Left cardiac atrium (tissue), 4 donors: ENCODE measurements at regions of chr1 and their contacts with region 1.

Region 1: GRCh38 chr1:26233903-26234643 is at the start of gene CEP85:
- DNase-seq: peak; percentile 99
- ATAC-seq: peak; percentile 99 to 100
- total RNA-seq, gene CEP85: 17.7 to 38.6 TPM

Region 2: DNA sequence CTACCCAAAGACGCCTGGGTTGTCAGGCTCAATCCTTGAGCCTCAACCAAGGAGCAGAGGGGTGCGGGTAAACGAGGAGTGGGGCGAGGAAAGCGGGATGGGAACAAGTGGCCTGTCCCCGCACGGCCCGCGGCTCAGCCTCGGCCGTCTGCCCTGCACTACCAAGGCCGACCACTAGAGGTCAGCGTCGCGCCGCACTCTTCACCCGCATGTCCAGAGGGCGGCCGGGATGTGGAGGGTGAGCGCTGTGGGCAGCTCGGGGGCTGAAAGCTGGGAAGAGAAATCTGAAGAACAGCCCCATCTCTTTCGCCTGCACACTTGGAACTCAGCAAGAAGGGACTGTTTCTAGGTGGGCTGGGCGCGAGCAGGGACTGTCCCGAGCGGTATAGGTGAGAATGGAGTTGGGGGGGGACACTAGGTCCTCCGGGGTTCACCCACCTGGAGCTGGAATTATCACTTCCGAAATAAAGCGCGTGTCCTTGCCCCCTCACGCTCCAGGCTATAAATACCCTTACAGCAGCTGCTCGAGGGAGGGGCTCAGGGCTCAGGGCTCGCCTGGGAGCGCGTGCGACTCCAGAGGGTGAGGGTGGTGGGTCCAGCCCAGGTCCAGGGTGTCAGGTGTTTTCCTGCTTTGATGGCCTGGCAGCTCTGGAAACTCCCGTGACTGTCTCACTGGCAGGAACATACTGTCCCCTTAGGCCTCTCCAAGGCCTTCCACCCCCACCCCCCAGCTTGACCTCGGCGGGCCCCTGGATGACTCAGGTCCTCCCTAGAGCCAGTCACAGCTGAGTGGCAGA is 197.9 kb before region 1 on chr1:
- intact Hi-C with region 1: loop called in 1 of 2 experiments (anchors 10 kb)
- DNase-seq: peak; percentile 87
- ATAC-seq: peak; percentile 91 to 92

Region 3: DNA sequence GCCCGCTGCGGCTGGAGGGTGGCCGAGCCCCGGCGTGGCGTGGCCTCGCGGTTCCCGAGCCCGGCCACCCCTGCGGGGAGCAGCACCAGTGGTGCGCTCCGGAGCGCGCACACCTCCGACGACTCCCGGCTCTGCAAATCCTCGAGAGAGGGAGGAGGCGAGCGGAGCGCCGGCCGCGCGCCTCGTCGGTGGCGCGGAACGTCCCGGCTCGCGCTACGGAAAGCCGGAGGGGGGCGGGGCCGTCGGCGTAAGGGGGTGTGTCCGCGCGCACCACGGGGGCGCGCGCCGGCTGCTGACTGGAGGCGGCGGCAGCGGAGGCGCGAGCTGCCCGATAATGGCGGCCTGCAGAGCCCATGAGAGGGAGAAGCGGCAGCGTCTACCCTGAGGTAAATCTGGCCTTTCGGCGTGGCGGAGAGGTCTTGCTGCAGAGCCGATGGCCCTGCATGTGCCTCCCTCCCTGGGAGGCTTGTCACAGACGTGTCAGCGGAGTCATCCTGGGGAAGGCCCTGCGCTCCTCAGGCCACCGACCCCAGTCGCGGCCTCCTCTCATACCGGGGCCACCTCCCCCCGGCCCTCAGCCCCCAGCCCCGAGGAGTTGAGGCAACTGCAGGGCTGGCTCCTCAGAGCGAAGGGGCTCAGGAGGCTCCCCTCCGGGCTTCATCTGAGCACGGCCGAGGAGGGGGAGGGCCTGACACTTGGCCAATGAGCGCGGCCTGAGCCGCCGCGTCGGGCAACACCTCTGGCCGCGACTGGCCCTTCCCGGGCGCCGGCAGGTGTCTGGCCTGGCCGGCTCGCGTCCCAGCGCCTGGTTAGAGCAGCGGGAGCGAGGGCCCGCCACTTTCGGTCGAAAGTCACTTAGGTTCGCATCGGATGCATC is 122.3 kb before region 1 on chr1 and contains the start of gene PDIK1L:
- intact Hi-C with region 1: loop called in 1 of 2 experiments (anchors 10 kb)
- DNase-seq: peak; percentile 93
- ATAC-seq: peak; percentile 94 to 96
- total RNA-seq, gene PDIK1L: 3.3 to 4.7 TPM

Region 4: DNA sequence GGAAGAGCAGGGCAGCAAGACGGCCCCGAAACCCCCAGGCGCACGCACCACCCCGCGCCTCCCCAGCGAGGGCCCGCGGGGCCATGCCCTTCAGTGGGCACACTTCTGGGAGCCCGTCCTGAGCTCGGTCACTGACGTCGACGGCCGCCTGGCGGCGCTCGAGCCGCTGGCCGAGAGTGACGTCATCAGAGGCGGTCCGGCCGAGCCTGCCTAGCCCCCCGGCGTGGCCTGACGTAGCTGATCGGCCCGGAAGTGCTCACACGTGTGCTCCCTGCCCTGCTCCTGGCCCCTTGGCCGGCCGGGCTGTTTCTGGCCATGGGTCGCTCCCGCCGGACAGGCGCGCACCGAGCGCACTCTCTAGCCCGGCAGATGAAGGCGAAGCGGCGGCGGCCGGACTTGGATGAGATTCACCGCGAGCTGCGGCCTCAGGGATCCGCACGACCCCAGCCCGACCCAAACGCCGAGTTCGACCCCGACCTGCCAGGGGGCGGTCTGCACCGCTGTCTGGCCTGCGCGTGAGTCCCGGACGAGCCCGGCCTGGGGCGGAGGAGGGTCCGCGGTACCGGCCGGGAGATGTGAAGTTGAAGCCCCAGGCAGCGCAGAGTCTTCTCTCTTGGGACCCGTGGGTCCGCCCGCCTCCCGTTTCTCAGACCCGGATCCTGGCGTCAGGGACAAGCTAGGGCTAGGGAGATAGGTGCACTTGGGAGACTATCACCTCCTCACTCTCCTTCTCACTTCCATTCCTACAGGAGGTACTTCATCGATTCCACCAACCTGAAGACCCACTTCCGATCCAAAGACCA is 64.2 kb before region 1 on chr1 and contains the start of gene ZNF593:
- intact Hi-C with region 1: loop called in 1 of 2 experiments (anchors 5 kb)
- DNase-seq: peak; percentile 95
- ATAC-seq: peak; percentile 98 to 99
- total RNA-seq, gene ZNF593: 13.4 to 24.3 TPM

Region 5: DNA sequence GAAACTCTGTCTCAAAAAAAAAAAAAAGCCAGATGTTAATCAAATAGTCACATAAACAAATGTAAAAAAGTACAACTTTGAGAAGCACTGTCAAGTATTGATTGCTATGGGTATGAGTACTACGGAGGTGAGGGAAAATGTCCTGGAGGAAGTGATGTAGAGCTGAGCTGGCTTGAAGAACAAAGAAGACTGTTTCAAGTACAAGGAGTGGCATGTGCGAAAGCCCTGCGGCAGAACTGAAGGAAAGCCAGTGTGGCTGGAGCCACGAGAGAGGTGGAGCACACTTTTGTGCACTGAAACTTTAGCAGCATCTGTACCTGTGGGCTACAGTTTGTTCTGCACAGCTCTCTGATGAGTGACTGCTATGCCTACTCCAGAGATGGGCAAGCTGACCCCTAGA is 290.1 kb after region 1 on chr1:
- intact Hi-C with region 1: no loop called
- DNase-seq: no peak
- ATAC-seq: no peak